Activated CD4-positive, alpha-beta T cell treated with anti-CD3 and anti-CD28 coated beads for 36 hours (primary cell): ENCODE measurements at regions of chr10 and their contacts with region 1.

Region 1: DNA sequence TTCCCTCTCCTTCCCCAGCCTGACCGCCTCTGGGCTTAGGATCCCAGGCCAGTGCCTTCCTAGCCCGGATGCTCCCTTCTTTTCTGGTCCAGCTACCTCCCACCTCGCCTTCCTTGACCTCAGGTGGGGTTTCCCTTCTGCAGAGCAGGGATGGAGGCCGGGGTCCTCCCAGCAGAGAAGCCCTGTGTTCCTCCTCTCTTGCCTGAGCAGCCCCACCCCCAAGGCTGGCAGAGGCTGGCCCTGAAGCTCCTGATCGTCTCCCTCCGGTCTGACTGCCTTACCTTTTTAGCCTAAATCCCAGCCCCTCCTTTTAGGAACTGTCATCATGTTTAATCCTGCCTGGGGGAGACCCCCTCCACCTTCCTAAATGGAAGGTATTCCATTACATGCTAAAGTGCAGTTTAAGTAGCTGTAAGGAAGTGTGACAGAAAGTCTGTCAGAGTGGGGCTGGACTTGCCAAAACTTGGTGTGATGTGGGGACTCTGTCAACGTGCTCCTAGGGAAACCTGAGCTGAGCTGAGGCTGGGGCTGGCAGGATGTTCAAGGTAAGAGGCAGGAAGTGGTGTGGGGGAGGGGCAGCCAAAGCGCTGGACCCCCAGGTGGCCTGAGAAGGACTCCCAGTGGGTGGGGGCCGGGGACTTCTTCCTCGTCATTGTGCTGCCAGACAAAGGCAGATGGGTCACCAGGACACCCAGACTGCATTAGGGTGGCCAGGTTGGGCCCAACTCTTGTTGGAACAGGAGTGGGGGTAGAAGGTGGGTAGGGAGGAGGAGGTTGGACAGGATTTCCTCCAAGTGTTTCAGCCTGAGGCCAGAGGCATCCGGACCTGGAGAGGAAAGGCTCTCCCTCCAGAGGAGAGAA is 39.5 kb downstream of the LBX1 start:
- DNase-seq: no peak
- ATAC-seq: no peak
- H3K4me3 Mint-ChIP-seq: no peak overlapping the region
- H3K27ac Mint-ChIP-seq: no peak overlapping the region
- H3K4me1 Mint-ChIP-seq: no peaks in the 10 kb centered on the region
- H3K27me3 Mint-ChIP-seq: peaks cover 11% of the 10 kb centered on the region

Region 2: DNA sequence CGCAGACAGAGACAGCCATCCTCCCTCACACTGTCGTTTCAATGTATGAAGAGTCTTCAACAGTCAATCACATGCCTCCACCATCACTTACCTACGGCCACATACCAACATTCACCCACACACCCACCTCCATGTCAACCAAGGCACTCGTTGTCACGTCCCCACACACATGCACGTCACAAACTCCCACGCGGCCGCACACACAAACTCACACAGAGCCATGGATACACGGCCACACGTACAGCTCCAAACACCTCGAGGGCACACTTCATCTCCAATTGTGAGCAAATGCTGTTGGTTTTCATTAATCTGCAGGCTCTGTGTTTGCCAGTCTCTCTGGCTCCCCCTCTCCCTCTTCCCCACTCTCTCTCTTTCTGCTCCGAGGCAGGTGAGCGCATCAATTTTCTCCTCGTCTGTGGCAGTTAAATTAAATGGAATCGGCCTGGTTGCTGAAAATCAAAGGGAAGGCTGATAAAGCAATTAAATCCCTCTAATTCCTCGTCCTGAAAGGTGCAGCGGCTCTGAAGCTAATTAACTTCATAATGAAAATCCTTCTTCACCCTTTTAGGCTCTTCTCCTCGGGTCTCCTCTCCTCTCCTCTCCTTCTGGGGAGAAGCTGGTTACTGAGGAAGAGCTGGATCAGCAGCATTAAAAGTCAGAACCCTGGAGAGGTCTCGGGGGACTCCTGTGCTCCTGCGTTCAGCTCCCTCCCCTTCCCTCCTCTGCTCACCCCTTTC is 330.9 kb before region 1 on chr10:
- CTCF ChIA-PET with region 1: no interaction called
- POLR2A ChIA-PET with region 1: no interaction called
- intact Hi-C with region 1: no loop called
- DNase-seq: no peak
- ATAC-seq: no peak
- H3K4me3 Mint-ChIP-seq: no peak overlapping the region
- H3K27ac Mint-ChIP-seq: no peak overlapping the region
- H3K4me1 Mint-ChIP-seq: no peaks in the 10 kb centered on the region
- H3K27me3 Mint-ChIP-seq: peaks cover 37% of the 10 kb centered on the region

Region 3: GRCh38 chr10:101319241-101319915 is 129.6 kb after region 1 on chr10:
- CTCF ChIA-PET with region 1: no interaction called
- POLR2A ChIA-PET with region 1: no interaction called
- intact Hi-C with region 1: no loop called
- DNase-seq: no peak
- ATAC-seq: no peak
- H3K4me3 Mint-ChIP-seq: no peak overlapping the region
- H3K27ac Mint-ChIP-seq: no peak overlapping the region
- H3K4me1 Mint-ChIP-seq: no peaks in the 10 kb centered on the region
- H3K27me3 Mint-ChIP-seq: peaks cover 9% of the 10 kb centered on the region

Region 4: GRCh38 chr10:101749047-101750016 is 559.6 kb after region 1 on chr10:
- CTCF ChIA-PET with region 1: no interaction called
- POLR2A ChIA-PET with region 1: no interaction called
- intact Hi-C with region 1: loop called in 1 of 2 experiments (anchors 10 kb)
- DNase-seq: no peak
- ATAC-seq: no peak
- H3K4me3 Mint-ChIP-seq: no peak overlapping the region
- H3K27ac Mint-ChIP-seq: no peak overlapping the region
- H3K4me1 Mint-ChIP-seq: no peaks in the 10 kb centered on the region
- H3K27me3 Mint-ChIP-seq: peaks cover 6% of the 10 kb centered on the region